GM12878 (cell line): ENCODE measurements at regions of chr3 and their contacts with region 1.

Region 1: DNA sequence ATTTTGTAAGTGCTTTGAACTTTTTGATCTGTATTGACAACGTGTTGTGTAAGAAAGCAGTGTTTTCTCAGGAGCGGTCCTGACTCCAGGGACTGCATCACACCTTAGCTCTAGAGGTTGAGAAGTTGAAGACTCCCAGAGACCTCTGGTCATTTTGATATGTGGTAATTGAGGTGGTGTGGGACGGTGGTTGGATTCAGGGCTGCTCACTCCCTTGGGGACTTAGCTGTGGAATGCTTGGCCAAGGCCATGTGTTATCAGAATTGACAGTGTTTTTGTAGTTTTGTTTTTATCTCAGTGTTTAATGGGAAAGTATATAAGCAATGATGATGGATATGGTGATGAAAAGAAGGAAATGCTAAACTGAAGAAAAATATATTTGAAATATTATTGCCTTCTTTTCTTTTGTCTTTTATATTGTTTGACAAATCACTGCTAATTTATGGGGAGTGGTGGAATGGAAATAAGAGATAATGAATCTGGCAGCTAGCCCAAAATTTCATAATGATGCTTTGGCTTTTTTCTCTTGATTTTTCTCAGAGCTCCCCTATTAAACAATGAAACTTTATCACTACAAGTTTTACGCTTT is 16.0 kb downstream of the CMSS1 start:
- DNase-seq: no peak
- ATAC-seq: no peak
- H3K4me3 ChIP-seq: no peak overlapping the region
- H3K27ac ChIP-seq: no peak overlapping the region
- H3K4me1 ChIP-seq: peaks cover 4% of the 10 kb centered on the region; the same call in 1 of the 2 replicates
- H3K27me3 ChIP-seq: no peaks in the 10 kb centered on the region
- CTCF ChIP-seq: no peak
- EP300 ChIP-seq: no peak
- POLR2A ChIP-seq: no peak
- RAD21 ChIP-seq: no peak

Region 2: DNA sequence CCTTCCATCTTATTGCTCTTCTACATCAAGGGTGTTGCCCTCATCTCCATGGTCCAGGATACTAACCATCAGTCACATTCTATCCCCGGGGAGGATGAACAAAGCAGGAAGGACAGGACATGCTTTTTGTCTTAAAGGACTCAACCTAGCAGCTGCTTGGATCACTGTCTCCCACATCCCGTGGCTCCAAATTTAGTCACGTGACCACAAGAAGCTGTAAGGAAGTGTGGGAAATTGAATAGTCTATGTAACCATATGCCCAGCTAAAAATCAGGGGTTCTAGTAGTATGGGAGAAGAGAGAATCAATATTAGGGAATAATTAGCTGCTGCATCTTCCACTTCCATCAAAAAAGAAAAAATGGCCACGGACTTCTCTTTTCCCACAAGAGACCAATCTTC is 34.3 kb before region 1 on chr3:
- CTCF ChIA-PET with region 1: no interaction called
- POLR2A ChIA-PET with region 1: no interaction called
- RAD21 ChIA-PET with region 1: no interaction called
- SMC1A ChIA-PET with region 1: no interaction called
- in situ Hi-C with region 1: no loop called
- intact Hi-C with region 1: no loop called
- DNase-seq: no peak
- ATAC-seq: no peak
- H3K4me3 ChIP-seq: no peak overlapping the region
- H3K27ac ChIP-seq: no peak overlapping the region
- H3K4me1 ChIP-seq: no peaks in the 10 kb centered on the region
- H3K27me3 ChIP-seq: no peaks in the 10 kb centered on the region
- CTCF ChIP-seq: no peak
- EP300 ChIP-seq: no peak
- POLR2A ChIP-seq: no peak
- RAD21 ChIP-seq: no peak

Region 3: DNA sequence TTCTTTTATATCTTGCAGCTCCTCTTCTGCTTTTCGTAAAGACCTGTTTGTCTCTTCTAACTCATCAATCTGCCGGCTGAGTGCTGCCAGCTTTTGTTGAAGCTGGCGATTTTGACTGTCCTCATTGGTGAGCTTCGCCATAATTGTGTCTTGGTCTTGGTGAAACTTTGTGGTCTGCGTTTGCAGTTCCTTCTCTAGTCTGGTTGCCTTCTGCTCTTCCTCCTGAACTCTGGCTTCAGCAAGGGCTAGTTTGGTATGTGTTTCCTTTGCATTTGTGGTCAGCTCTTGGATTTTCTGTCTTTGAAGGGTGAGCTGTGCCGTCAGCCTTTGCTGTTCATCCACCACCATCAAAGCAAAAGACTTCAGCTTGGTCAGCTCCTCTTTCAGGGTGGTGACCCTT is 16.9 kb after region 1 on chr3:
- CTCF ChIA-PET with region 1: interaction called, 15 read pairs
- POLR2A ChIA-PET with region 1: no interaction called
- RAD21 ChIA-PET with region 1: interaction called, 6 read pairs
- SMC1A ChIA-PET with region 1: interaction called, 9 read pairs
- in situ Hi-C with region 1: no loop called
- intact Hi-C with region 1: no loop called
- DNase-seq: no peak
- ATAC-seq: no peak; the same call in 2 of the 3 replicates
- H3K4me3 ChIP-seq: no peak overlapping the region
- H3K27ac ChIP-seq: no peak overlapping the region
- H3K4me1 ChIP-seq: no peaks in the 10 kb centered on the region
- H3K27me3 ChIP-seq: no peaks in the 10 kb centered on the region
- CTCF ChIP-seq: no peak
- EP300 ChIP-seq: no peak
- POLR2A ChIP-seq: no peak
- RAD21 ChIP-seq: no peak

Region 4: GRCh38 chr3:100068826-100069225 is 235.1 kb after region 1 on chr3:
- CTCF ChIA-PET with region 1: interaction called, 24 read pairs
- POLR2A ChIA-PET with region 1: interaction called, 5 read pairs
- RAD21 ChIA-PET with region 1: interaction called, 5 read pairs
- SMC1A ChIA-PET with region 1: interaction called, 11 read pairs
- in situ Hi-C with region 1: loop called (anchors 5 kb)
- intact Hi-C with region 1: no loop called
- DNase-seq: peak; percentile 33
- ATAC-seq: peak; percentile 96
- H3K4me3 ChIP-seq: no peak overlapping the region
- H3K27ac ChIP-seq: no peak overlapping the region
- H3K4me1 ChIP-seq: peaks cover 16% of the 10 kb centered on the region
- H3K27me3 ChIP-seq: no peaks in the 10 kb centered on the region
- CTCF ChIP-seq: peak; percentile 74 to 79 (median 79)
- EP300 ChIP-seq: no peak
- POLR2A ChIP-seq: no peak
- RAD21 ChIP-seq: peak; percentile 92

Region 5: DNA sequence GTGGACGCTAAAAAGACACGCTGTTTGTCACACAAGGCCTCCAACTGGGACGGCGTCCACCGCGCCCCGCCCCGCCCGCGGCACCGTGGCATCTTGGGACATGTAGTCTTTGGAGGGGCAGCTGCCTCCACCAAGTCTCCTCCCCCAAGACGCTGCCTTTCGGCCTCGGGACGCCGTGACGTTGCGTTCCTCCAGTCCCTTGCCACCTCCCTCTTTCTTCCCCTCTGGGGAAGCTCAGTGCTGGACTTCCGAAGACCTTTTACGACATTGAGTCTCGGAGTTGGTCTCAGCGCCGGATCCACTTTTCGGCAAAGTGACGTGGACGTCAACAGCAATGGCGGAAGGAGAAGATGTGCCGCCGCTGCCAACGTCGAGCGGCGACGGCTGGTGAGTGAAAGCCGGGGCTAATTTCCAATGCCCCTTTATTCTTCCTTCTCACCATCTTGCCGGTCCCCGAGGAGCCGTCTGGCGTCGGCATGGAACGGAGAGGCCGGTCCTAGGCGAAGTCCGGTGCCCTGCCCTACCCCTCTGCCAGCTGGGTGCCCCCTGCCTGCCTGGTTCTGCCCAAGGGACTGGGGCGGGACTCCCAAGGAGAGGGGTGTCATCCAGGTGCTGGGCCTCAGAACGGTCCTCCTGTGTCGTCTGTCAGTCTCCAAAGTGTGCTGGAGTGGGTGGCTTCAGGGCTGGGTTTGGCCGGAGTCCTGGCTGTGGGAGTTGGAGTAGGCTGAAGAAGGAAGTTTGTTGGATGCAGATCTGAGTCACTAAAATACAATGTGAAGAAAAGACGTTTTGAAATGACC is 427.2 kb after region 1 on chr3 and contains the start of gene TBC1D23:
- CTCF ChIA-PET with region 1: interaction called, 36 read pairs
- POLR2A ChIA-PET with region 1: no interaction called
- RAD21 ChIA-PET with region 1: interaction called, 7 read pairs
- SMC1A ChIA-PET with region 1: interaction called, 25 read pairs
- in situ Hi-C with region 1: no loop called
- intact Hi-C with region 1: no loop called
- DNase-seq: peak; percentile 98
- ATAC-seq: peak; percentile 99
- H3K4me3 ChIP-seq: peak within 1 kb of the TSS; percentile 95
- H3K27ac ChIP-seq: peak within 1 kb of the TSS; percentile 84
- H3K4me1 ChIP-seq: no peaks in the 10 kb centered on the region
- H3K27me3 ChIP-seq: no peaks in the 10 kb centered on the region
- CTCF ChIP-seq: no peak
- EP300 ChIP-seq: no peak
- POLR2A ChIP-seq: peak; percentile 87
- RAD21 ChIP-seq: no peak
- polyA plus RNA-seq, gene TBC1D23: 13.5 to 16.2 TPM

Region 6: GRCh38 chr3:100455841-100456550 is 622.3 kb after region 1 on chr3:
- CTCF ChIA-PET with region 1: interaction called, 4 read pairs
- POLR2A ChIA-PET with region 1: no interaction called
- RAD21 ChIA-PET with region 1: no interaction called
- SMC1A ChIA-PET with region 1: no interaction called
- in situ Hi-C with region 1: no loop called
- intact Hi-C with region 1: loop called (anchors 5 kb)
- DNase-seq: no peak
- ATAC-seq: no peak
- H3K4me3 ChIP-seq: no peak overlapping the region
- H3K27ac ChIP-seq: no peak overlapping the region
- H3K4me1 ChIP-seq: no peaks in the 10 kb centered on the region
- H3K27me3 ChIP-seq: no peaks in the 10 kb centered on the region
- CTCF ChIP-seq: no peak
- EP300 ChIP-seq: no peak
- POLR2A ChIP-seq: no peak
- RAD21 ChIP-seq: no peak